RWPE1 (cell line): ENCODE measurements at regions of chr3 and their contacts with region 1.

Region 1: GRCh38 chr3:39288300-39288808 is 8.5 kb upstream of the CX3CR1 start:
- DNase-seq: peak; percentile 87
- H3K27ac ChIP-seq: no peak overlapping the region
- CTCF ChIP-seq: peak; percentile 90

Region 2: DNA sequence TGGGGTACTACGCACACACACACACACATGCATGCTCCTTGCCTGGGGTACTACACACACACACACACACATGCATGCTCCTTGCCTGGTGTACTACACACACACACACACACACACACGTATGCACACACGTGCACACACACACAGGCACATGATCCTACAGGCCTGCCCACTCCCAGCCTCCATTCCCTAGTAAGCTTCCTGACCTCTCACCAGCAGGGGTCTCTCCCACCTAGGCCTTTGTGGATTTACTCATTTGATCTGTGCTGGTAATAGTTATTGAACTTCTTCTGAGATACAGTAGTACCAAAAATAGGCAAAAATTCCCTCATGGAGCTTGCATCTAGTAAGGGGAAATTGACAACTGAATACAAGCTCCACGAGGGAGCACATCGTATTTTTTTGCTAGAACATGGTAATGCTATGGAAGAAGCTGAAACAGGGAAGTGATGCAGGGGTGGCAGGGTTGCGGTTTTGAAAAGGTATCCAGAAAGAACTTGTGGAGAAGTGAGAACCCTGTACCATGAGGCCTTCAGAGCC is 161.8 kb before region 1 on chr3:
- CTCF ChIA-PET with region 1: interaction called, 15 read pairs
- POLR2A ChIA-PET with region 1: no interaction called
- DNase-seq: no peak
- H3K27ac ChIP-seq: peak overlapping the region; percentile 45; the same call in 1 of the 2 replicates
- CTCF ChIP-seq: peak; percentile 33; the same call in 1 of the 2 replicates

Region 3: DNA sequence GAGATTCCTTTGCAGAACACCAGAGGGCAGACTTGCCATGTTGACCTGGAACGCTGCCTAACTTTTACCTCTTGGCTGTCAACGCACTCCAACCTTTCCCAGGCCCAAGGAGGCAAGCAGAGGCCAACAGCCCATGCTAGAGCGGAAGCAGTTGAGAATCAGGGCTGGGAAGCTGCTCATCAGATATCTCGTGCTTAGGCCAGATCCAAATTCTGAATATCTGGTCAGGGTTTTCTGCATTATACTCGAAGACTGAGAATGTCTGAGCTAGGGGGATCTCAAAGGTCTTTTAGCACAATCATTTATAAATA is 98.4 kb before region 1 on chr3:
- CTCF ChIA-PET with region 1: interaction called, 17 read pairs
- POLR2A ChIA-PET with region 1: no interaction called
- DNase-seq: peak; percentile 50
- H3K27ac ChIP-seq: no peak overlapping the region
- CTCF ChIP-seq: peak; percentile 76

Region 4: GRCh38 chr3:39196671-39197356 is 91.5 kb before region 1 on chr3:
- CTCF ChIA-PET with region 1: interaction called, 10 read pairs
- POLR2A ChIA-PET with region 1: no interaction called
- DNase-seq: no peak
- H3K27ac ChIP-seq: no peak overlapping the region
- CTCF ChIP-seq: no peak